CD4-positive, alpha-beta memory T cell (primary cell): ENCODE measurements at regions of chr17 and their contacts with region 1.

Region 1: DNA sequence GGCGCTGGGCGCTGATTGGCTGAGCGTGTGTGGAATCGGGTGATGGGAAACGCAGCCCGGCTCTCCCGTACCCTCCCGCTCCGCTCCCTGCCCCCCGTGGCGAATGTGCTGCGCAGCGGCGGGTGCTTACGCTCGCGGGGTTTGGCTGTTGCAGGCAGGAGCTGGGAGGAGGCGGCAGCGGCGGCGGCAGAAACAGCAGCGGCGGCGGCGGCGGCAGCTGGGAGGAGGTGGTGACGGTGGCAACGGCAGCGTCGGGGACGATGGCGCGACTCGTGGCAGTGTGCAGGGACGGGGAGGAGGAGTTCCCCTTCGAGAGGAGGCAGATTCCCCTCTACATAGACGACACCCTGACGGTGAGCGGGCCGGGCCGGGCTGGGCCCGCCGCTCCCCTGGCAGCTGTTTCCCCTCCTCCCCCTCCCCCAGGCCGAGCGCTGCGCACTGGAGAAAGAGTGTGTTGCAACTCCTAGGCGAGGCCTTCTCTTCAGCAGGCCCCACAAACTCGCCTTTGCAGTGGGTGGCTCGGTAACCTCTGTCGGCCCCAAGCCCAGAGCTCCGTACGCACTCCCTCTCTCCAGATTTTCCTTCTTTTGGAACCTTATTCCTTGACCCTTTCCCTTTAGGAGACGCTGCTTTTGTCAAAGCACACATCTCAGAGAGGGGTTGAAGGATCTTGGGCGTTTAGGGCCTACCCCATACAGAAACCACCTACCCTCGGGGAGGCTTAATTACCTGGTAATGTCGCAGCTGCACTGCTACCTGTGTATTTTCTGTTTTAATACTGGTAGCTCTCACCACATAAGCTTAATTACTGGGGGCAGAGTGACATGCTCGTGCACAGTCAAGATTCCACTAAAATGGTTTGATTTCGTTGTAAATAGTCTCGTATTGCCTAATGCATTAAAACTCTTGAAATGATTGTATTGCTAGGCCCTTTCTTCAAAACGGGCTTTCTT is 1.0 kb downstream of the GGNBP2 start:
- DNase-seq: peak; percentile 97 to 99 (median 98)
- H3K4me3 ChIP-seq: peak overlapping the region; percentile 89 to 90
- H3K4me3 Mint-ChIP-seq: peak overlapping the region; percentile 88 to 97 (median 92)
- H3K27ac ChIP-seq: peak overlapping the region; percentile 82
- H3K27ac Mint-ChIP-seq: peak overlapping the region; percentile 92 to 98 (median 96)
- H3K4me1 ChIP-seq: peaks cover 59% of the 10 kb centered on the region
- H3K4me1 Mint-ChIP-seq: peaks cover 25 to 64% (median 40%) of the 10 kb centered on the region in 4 donors
- H3K27me3 ChIP-seq: no peaks in the 10 kb centered on the region
- H3K27me3 Mint-ChIP-seq: no peaks in the 10 kb centered on the region

Region 2: GRCh38 chr17:36463916-36464315 is 81.8 kb before region 1 on chr17:
- CTCF ChIA-PET with region 1: no interaction called
- POLR2A ChIA-PET with region 1: no interaction called
- intact Hi-C with region 1: no loop called
- DNase-seq: peak; percentile 16 to 55 (median 25)
- H3K4me3 ChIP-seq: no peak overlapping the region
- H3K4me3 Mint-ChIP-seq: no peak overlapping the region
- H3K27ac ChIP-seq: no peak overlapping the region
- H3K27ac Mint-ChIP-seq: no peak overlapping the region
- H3K4me1 ChIP-seq: no peaks in the 10 kb centered on the region
- H3K4me1 Mint-ChIP-seq: no peaks in the 10 kb centered on the region
- H3K27me3 ChIP-seq: peaks cover 8% of the 10 kb centered on the region
- H3K27me3 Mint-ChIP-seq: peaks cover 40 to 52% of the 10 kb centered on the region in 2 donors

Region 3: GRCh38 chr17:36486204-36487194 is 59.2 kb before region 1 on chr17 and contains the start of gene ZNHIT3:
- CTCF ChIA-PET with region 1: interaction called, 3 read pairs
- POLR2A ChIA-PET with region 1: interaction called, 16 read pairs
- intact Hi-C with region 1: loop called (anchors 1 kb)
- DNase-seq: peak; percentile 91 to 95 (median 91)
- H3K4me3 ChIP-seq: peak within 1 kb of the TSS; percentile 72 to 91
- H3K4me3 Mint-ChIP-seq: peak within 1 kb of the TSS; percentile 97 to 100 (median 99)
- H3K27ac ChIP-seq: peak within 1 kb of the TSS; percentile 70
- H3K27ac Mint-ChIP-seq: peak within 1 kb of the TSS; percentile 85 to 100 (median 99)
- H3K4me1 ChIP-seq: peaks cover 65% of the 10 kb centered on the region
- H3K4me1 Mint-ChIP-seq: peaks cover 28 to 82% (median 46%) of the 10 kb centered on the region in 4 donors
- H3K27me3 ChIP-seq: peaks cover 10% of the 10 kb centered on the region
- H3K27me3 Mint-ChIP-seq: peaks cover 9% of the 10 kb centered on the region in 2 donors
- total RNA-seq, gene ZNHIT3: 66.6 to 68.3 TPM

Region 4: DNA sequence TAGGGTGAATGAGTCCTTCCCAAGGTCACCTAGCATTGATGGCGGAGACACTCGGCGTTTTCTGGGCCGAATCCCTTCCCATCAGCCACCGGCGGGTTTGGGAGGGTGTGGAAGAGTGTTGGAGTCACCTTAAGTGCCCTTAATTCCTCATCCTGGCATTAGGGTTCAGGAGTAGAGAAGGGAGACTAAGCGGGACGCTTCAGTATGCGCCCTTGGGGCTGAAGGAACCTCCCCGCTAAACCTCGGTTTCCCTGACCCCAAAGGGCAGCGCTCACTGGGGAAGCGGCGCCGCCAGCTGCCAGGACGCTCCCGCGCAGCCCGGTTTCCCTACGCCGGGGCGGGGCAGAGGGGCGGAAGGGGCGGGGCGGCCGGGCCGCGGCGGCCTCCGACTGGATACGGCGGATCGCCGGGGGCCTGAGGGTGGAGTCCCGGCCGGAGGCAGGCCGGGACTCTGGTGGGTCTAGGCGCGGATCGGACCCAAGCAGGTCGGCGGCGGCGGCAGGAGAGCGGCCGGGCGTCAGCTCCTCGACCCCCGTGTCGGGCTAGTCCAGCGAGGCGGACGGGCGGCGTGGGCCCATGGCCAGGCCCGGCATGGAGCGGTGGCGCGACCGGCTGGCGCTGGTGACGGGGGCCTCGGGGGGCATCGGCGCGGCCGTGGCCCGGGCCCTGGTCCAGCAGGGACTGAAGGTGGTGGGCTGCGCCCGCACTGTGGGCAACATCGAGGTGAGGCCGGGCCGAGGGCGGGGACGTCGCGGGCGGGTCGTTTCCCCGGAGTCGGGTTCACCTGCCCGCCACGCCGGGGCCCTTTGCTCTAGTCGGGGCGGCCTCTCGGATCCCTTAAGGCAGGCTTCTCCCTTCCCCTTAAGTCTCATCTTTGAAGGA is 45.9 kb after region 1 on chr17 and contains the start of gene DHRS11:
- CTCF ChIA-PET with region 1: no interaction called
- POLR2A ChIA-PET with region 1: interaction called, 15 read pairs
- intact Hi-C with region 1: loop called (anchors 1 kb)
- DNase-seq: peak; percentile 54 to 72 (median 57)
- H3K4me3 ChIP-seq: peak within 1 kb of the TSS; percentile 11 to 62
- H3K4me3 Mint-ChIP-seq: peak within 1 kb of the TSS; percentile 75 to 86 (median 80)
- H3K27ac ChIP-seq: peak within 1 kb of the TSS; percentile 66
- H3K27ac Mint-ChIP-seq: peak within 1 kb of the TSS; percentile 75 to 88 (median 85)
- H3K4me1 ChIP-seq: peaks cover 20% of the 10 kb centered on the region
- H3K4me1 Mint-ChIP-seq: peaks cover 9 to 19% (median 16%) of the 10 kb centered on the region in 4 donors
- H3K27me3 ChIP-seq: no peaks in the 10 kb centered on the region
- H3K27me3 Mint-ChIP-seq: no peaks in the 10 kb centered on the region
- total RNA-seq, gene DHRS11: 7.2 to 7.8 TPM